Gastrocnemius medialis (tissue), 4 donors: ENCODE measurements at regions of chr11 and their contacts with region 1.

Region 1: GRCh38 chr11:113896156-113896879 is 8.3 kb upstream of the HTR3B start:
- DNase-seq: peak in 1 of 2 donors; percentile 21
- ATAC-seq: peak; percentile 70 to 78
- H3K4me3 ChIP-seq: no peak overlapping the region
- H3K27ac ChIP-seq: peak overlapping the region; percentile 65 to 81 (median 72)
- H3K4me1 ChIP-seq: peaks cover 11 to 12% of the 10 kb centered on the region in 2 donors
- H3K27me3 ChIP-seq: no peaks in the 10 kb centered on the region
- CTCF ChIP-seq: peak; percentile 60 to 79 (median 74)
- POLR2A ChIP-seq: no peak

Region 2: GRCh38 chr11:114026355-114026754 is 130.0 kb after region 1 on chr11:
- in situ Hi-C with region 1: loop called in 1 of 4 experiments (anchors 10 kb)
- intact Hi-C with region 1: loop called (anchors 10 kb)
- DNase-seq: no peak
- ATAC-seq: no peak
- H3K4me3 ChIP-seq: no peak overlapping the region
- H3K27ac ChIP-seq: no peak overlapping the region
- H3K4me1 ChIP-seq: no peaks in the 10 kb centered on the region
- H3K27me3 ChIP-seq: no peaks in the 10 kb centered on the region
- CTCF ChIP-seq: no peak
- POLR2A ChIP-seq: no peak

Region 3: GRCh38 chr11:114036156-114036811 is 140.0 kb after region 1 on chr11:
- in situ Hi-C with region 1: no loop called
- intact Hi-C with region 1: loop called (anchors 10 kb)
- DNase-seq: peak; percentile 83 to 86
- ATAC-seq: peak; percentile 67 to 76
- H3K4me3 ChIP-seq: peak overlapping the region; percentile 44 to 51 (median 48)
- H3K27ac ChIP-seq: peak overlapping the region; percentile 67 to 85 (median 76)
- H3K4me1 ChIP-seq: peaks cover 27 to 40% of the 10 kb centered on the region in 2 donors
- H3K27me3 ChIP-seq: no peaks in the 10 kb centered on the region
- CTCF ChIP-seq: peak; percentile 84 to 93 (median 93)
- POLR2A ChIP-seq: peak; percentile 13 to 50